HepG2 (cell line): ENCODE measurements at regions of chr9 and their contacts with region 1.

Region 1: GRCh38 chr9:7045361-7045760 is 287.6 kb downstream of the KDM4C start:
- DNase-seq: no peak
- ATAC-seq: no peak
- H3K4me3 ChIP-seq: no peak overlapping the region
- H3K27ac ChIP-seq: no peak overlapping the region
- H3K4me1 ChIP-seq: no peaks in the 10 kb centered on the region
- H3K27me3 ChIP-seq: no peaks in the 10 kb centered on the region
- CTCF ChIP-seq: no peak
- EP300 ChIP-seq: no peak
- POLR2A ChIP-seq: no peak
- RAD21 ChIP-seq: no peak

Region 2: DNA sequence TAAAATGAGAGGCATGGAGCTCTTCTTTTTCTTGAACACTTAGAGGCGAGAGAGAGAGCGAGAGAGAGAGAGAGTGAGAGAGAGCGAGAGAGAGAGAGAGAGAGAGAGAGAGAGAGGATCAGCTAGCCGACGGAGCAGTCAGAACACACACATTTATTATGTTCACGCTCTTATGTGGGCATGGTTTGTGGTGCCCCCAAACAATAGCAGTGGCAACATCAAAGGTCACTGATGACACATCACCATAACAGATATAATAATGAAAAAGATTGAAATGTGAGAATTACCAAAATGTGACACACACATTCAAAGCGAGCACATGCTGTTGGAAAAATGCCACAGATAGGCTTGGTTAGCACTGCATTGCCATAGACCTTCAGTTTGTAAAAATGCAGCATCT is 171.5 kb before region 1 on chr9:
- CTCF ChIA-PET with region 1: no interaction called
- POLR2A ChIA-PET with region 1: no interaction called
- in situ Hi-C with region 1: no loop called
- intact Hi-C with region 1: no loop called
- DNase-seq: no peak
- ATAC-seq: no peak
- H3K4me3 ChIP-seq: no peak overlapping the region
- H3K27ac ChIP-seq: no peak overlapping the region
- H3K4me1 ChIP-seq: peaks cover 86% of the 10 kb centered on the region
- H3K27me3 ChIP-seq: no peaks in the 10 kb centered on the region
- CTCF ChIP-seq: no peak
- EP300 ChIP-seq: no peak
- POLR2A ChIP-seq: no peak
- RAD21 ChIP-seq: no peak

Region 3: DNA sequence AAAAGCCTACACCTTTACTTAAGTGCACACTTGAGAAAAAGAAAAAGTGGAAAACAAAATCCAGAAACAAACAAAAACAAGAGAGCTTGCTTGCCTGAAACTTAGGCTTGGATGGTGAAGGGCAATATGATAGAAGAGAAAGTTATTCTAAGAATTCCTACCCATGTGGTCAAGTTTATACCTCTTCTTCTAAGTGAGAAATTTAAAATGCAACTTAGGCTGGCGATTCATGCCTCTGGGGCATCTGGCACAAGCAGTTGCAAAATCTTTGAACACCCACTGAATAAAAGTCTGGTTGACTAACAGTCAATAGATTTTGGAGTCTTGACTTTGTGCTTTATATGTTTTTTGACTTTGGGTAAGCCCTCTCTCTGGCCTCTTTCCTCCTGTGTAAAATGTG is 48.0 kb before region 1 on chr9:
- CTCF ChIA-PET with region 1: no interaction called
- POLR2A ChIA-PET with region 1: no interaction called
- in situ Hi-C with region 1: no loop called
- intact Hi-C with region 1: loop called (anchors 1 kb)
- DNase-seq: no peak
- ATAC-seq: no peak
- H3K4me3 ChIP-seq: no peak overlapping the region
- H3K27ac ChIP-seq: no peak overlapping the region
- H3K4me1 ChIP-seq: no peaks in the 10 kb centered on the region
- H3K27me3 ChIP-seq: no peaks in the 10 kb centered on the region
- CTCF ChIP-seq: no peak
- EP300 ChIP-seq: no peak
- POLR2A ChIP-seq: no peak
- RAD21 ChIP-seq: no peak

Region 4: GRCh38 chr9:7081065-7081600 is 35.8 kb after region 1 on chr9:
- CTCF ChIA-PET with region 1: no interaction called
- POLR2A ChIA-PET with region 1: no interaction called
- in situ Hi-C with region 1: no loop called
- intact Hi-C with region 1: no loop called
- DNase-seq: no peak
- ATAC-seq: no peak
- H3K4me3 ChIP-seq: no peak overlapping the region
- H3K27ac ChIP-seq: no peak overlapping the region
- H3K4me1 ChIP-seq: 0 out of 2 replicates have a peak, but pooled peaks cover 7% of the 10 kb centered on the region
- H3K27me3 ChIP-seq: no peaks in the 10 kb centered on the region
- CTCF ChIP-seq: no peak
- EP300 ChIP-seq: no peak
- POLR2A ChIP-seq: no peak
- RAD21 ChIP-seq: no peak